ENCODE measurements at regions of chr11 and their contacts with region 1.

Region 1: GRCh38 chr11:18115360-18116127 is 9.7 kb upstream of the SAAL1 start:
- DNase-seq: peak; percentile 81
- CTCF ChIP-seq: peak; percentile 80

Region 2: GRCh38 chr11:18132341-18132740 is 16.8 kb after region 1 on chr11 and contains the start of gene MRGPRX3:
- CTCF ChIA-PET with region 1: interaction called, 15 read pairs
- POLR2A ChIA-PET with region 1: no interaction called
- DNase-seq: no peak
- CTCF ChIP-seq: no peak

Region 3: DNA sequence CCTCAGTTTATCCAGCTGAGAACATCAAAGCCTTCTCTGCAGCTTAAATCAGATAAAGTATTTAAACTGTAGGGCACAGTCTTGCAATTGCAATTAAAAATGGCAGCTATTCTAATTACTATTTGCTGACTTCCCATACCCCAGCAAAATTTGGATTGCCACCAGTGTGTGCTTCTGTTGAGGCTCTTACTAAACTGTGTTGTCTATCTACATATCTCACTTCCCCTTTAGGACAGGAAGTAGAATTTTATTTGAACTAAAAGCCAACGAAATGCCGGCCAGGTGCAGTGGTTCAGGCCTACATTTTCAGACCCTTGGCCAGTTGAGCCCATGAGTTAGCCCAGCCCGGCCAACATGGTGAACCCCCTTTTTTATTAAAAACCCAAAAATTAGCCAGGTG is 114.0 kb after region 1 on chr11:
- CTCF ChIA-PET with region 1: interaction called, 11 read pairs
- POLR2A ChIA-PET with region 1: no interaction called
- DNase-seq: peak; percentile 73
- CTCF ChIP-seq: no peak

Region 4: DNA sequence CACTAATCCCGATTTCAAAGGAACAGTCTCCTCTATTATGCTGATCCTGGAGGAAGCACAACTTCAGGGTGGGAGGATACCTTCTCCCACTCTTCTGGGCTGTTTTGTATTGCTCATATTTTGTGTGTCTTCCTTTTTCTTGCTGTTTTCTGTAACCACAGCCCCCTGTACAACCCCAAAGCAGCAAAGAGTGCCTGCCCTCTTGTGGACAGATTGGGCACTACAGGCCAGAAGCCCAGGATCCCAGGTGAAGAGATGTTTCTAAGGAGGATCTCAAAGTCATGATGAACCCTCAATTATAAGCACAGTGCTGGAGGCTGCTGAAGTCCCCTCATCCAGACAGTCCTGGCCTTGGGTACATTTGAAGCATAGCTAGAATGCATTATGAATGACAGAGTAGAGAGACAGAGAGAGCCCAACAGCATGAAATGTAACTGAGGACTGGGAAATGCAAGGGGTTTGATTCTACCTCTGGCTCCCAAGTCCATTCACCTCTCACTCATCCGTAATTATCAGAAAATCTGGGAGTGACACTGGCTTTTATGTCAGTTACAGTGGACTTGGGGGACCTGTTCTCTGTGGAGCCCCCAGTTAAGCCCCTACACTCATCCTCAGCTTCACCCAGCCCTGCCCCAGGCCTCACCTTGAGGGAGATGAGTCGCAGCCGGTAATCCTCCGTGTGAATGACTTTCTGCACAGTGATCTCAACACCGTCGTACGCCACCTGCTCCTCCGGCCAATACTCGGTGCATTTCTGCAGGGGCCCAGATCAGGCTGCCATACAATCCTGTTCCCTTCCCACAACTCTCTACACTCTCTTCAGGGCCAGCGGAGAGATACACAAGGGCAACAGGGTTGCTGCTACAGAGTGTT is 616.6 kb after region 1 on chr11:
- CTCF ChIA-PET with region 1: interaction called, 24 read pairs
- POLR2A ChIA-PET with region 1: no interaction called
- DNase-seq: peak; percentile 75
- CTCF ChIP-seq: peak; percentile 98

Region 5: DNA sequence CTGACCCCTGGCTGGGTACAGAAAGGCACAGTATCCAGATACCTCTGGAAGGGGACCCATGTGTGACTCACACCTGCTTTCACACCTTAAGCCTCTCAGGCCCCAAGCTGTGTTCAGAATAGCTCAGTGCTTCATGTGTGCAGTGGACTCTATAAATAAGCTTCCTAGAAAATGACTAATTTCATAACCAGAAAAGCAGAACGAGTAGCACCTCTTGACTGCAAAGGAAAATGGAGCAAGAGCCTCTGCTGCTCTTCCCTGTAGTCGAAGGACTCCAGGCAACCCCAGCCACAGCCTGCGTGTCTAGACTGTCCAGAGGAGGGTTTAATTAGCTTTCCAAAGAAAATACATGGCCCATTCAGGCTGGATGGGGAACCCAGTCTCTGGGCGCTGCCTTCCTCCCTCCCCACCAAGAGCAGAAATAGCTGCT is 652.9 kb after region 1 on chr11:
- CTCF ChIA-PET with region 1: interaction called, 13 read pairs
- POLR2A ChIA-PET with region 1: no interaction called
- DNase-seq: peak; percentile 69
- CTCF ChIP-seq: no peak

Measured in GM10248 (cell line).